AG04450 (cell line): ENCODE measurements at regions of chr12 and their contacts with region 1.

Region 1: DNA sequence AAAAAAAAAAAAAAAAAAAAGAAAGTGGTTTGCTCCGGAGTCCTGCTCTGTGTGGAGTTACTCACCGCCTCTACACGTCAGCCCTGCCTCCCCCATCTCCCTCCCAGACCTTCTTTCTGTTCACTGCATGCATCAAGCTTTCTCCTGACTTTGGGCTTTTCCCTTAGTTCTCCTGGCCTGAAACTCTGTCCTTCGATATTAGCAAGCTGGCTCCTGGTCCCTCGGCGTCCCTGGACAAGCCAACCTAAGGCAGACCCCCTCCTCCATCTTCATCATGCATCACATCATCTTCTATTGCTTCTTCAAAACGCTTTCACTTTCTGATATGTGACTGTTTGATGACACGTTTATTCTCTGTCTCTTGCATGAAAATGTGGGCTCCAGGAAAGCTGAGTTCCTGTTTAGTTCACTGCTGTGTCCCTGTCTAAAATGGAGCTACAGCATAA is 40.6 kb downstream of the SLC15A4 start:
- DNase-seq: no peak
- H3K4me3 ChIP-seq: 0 out of 2 replicates have a peak overlapping the region, but pooled peaks have one; percentile 20
- H3K27ac ChIP-seq: no peak overlapping the region
- H3K27me3 ChIP-seq: no peaks in the 10 kb centered on the region
- CTCF ChIP-seq: no peak

Region 2: DNA sequence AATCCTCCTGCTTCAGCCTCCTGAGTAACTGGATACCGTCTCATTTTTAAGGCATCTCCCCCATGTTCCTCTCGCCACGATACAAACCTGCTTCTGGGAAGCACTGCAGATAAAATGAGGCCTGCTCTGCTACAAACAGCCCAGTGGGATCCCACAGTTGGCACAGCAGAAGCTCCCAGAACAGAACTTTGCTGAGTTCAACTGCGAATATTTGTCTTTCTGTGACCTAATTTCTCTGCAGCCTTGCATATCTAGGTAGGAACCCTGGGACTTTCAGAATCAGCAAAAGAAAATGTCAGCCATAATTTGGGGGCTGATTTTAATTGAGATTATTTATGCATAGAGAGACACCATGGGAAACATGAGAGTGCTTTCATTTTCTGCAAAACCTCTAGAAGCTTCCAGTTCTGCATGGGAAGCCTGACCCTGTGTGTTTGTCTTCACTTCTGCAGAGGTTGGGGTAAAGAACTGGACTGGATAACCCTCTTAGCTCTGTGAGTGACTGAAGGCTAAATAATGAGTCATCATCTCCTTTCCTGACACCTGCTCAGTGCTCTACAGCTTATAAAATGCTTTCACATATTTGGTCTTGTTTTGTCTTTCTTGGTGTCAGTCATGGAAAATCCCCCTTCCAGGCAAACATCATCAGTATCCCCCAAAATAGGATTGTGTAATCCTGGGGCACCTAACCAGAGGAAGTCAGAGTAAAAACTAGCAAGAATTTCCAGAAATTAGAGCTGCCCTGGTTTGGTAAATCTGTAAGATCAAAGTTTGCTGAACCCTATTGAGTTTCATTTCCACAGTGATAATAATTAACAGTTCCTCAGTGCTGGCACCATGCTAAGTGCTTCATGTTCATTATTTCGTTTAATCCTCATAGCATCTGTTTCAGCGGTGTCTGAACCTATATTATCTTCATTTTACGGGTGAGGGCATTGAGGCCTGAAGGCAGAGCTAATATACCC is 145.2 kb before region 1 on chr12:
- CTCF ChIA-PET with region 1: no interaction called
- POLR2A ChIA-PET with region 1: no interaction called
- DNase-seq: no peak
- H3K4me3 ChIP-seq: no peak overlapping the region
- H3K27ac ChIP-seq: no peak overlapping the region
- H3K27me3 ChIP-seq: no peaks in the 10 kb centered on the region
- CTCF ChIP-seq: no peak

Region 3: GRCh38 chr12:128729628-128730121 is 53.5 kb before region 1 on chr12:
- CTCF ChIA-PET with region 1: no interaction called
- POLR2A ChIA-PET with region 1: no interaction called
- DNase-seq: no peak
- H3K4me3 ChIP-seq: no peak overlapping the region
- H3K27ac ChIP-seq: no peak overlapping the region
- H3K27me3 ChIP-seq: no peaks in the 10 kb centered on the region
- CTCF ChIP-seq: no peak

Region 4: GRCh38 chr12:128761379-128761790 is 21.8 kb before region 1 on chr12:
- CTCF ChIA-PET with region 1: no interaction called
- POLR2A ChIA-PET with region 1: no interaction called
- DNase-seq: no peak
- H3K4me3 ChIP-seq: no peak overlapping the region
- H3K27ac ChIP-seq: no peak overlapping the region
- H3K27me3 ChIP-seq: no peaks in the 10 kb centered on the region
- CTCF ChIP-seq: no peak

Region 5: GRCh38 chr12:128771681-128772080 is 11.5 kb before region 1 on chr12:
- CTCF ChIA-PET with region 1: interaction called, 23 read pairs
- POLR2A ChIA-PET with region 1: no interaction called
- DNase-seq: no peak
- H3K4me3 ChIP-seq: no peak overlapping the region
- H3K27ac ChIP-seq: no peak overlapping the region
- H3K27me3 ChIP-seq: no peaks in the 10 kb centered on the region
- CTCF ChIP-seq: no peak

Region 6: DNA sequence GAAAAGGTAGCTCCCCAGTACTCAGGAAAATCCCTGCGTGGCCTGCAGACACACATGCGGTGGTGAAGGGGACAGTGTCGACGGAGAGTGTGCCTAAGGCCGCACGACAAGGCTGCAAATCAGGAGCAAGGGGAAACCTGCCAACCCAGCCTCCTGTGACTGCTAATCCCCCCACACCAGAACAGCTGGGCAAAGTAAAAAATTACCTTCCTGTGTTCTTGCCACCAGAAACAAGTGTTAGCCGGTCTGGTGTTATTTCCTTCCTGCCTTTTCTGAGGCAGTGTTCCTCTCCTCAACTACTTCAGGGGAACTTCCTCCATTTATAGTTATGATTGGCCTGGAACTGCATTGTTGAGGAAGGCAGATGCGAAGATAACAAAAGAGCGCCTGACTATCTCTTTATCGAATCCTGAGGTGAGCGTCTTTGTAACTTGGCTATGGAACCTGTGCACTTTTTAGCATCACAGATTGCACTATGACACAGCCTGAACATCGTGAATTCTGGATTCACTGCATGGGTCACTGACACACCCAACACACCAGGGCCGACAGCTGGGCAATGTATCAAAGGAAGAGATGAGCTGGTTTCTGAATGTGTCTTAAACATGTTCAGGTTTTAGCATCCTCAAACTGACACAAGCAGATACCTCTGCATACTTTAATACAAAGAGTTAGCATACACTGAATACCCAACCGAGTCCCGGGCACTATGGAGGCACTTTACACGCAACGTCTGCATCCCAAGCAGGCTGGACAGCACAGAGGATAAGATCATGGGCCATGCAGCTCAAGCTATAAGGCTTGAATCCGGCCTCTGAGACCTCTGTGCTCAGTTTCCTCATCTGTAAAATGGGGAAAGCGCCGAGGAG is 11.7 kb after region 1 on chr12:
- CTCF ChIA-PET with region 1: interaction called, 33 read pairs
- POLR2A ChIA-PET with region 1: no interaction called
- DNase-seq: no peak
- H3K4me3 ChIP-seq: no peak overlapping the region
- H3K27ac ChIP-seq: no peak overlapping the region
- H3K27me3 ChIP-seq: no peaks in the 10 kb centered on the region
- CTCF ChIP-seq: no peak

Region 7: GRCh38 chr12:128853575-128854197 is 70.5 kb after region 1 on chr12:
- CTCF ChIA-PET with region 1: no interaction called
- POLR2A ChIA-PET with region 1: no interaction called
- DNase-seq: no peak
- H3K4me3 ChIP-seq: no peak overlapping the region
- H3K27ac ChIP-seq: no peak overlapping the region
- H3K27me3 ChIP-seq: no peaks in the 10 kb centered on the region
- CTCF ChIP-seq: no peak